Lower leg skin (tissue), 4 donors: ENCODE measurements at regions of chr9 and their contacts with region 1.

Region 1: GRCh38 chr9:93552923-93553322 is 23.5 kb upstream of the PHF2 start:
- DNase-seq: no peak
- H3K4me3 ChIP-seq: no peak overlapping the region
- CTCF ChIP-seq: no peak
- POLR2A ChIP-seq: no peak

Region 2: DNA sequence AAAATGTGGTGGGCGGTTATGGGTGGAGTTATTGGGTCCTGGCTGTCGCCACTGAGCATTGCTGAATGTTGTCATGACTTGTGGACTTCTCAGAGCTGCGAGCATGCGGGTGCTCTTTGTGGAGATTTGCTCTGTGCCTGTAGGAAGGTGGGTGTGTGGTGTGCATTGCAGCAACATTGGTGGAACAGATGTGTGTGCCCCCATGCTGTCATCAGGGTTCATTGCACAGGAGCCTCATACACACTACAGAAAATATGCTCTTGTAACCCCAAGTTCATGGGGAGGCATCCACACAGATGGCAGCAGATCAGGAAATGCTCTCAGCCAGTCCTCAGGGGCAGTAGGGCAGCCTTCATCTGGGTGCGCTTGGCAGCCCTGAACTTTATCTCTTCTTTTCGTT is 32.4 kb before region 1 on chr9:
- intact Hi-C with region 1: loop called (anchors 1 kb)
- DNase-seq: no peak
- H3K4me3 ChIP-seq: no peak overlapping the region
- CTCF ChIP-seq: no peak
- POLR2A ChIP-seq: no peak